B cell (primary cell): ENCODE measurements at regions of chr12 and their contacts with region 1.

Region 1: GRCh38 chr12:15899282-15899870 is 11.8 kb upstream of the DERA start:
- DNase-seq: peak; percentile 59
- ATAC-seq: peak; percentile 36
- H3K4me3 ChIP-seq: no peak overlapping the region
- H3K4me3 Mint-ChIP-seq: no peak overlapping the region
- H3K27ac ChIP-seq: peak overlapping the region in 1 of 2 donors; percentile 45
- H3K27ac Mint-ChIP-seq: peak overlapping the region; percentile 34
- H3K4me1 ChIP-seq: no peaks in the 10 kb centered on the region
- H3K4me1 Mint-ChIP-seq: peaks cover 3% of the 10 kb centered on the region
- H3K27me3 ChIP-seq: no peaks in the 10 kb centered on the region
- H3K27me3 Mint-ChIP-seq: no peaks in the 10 kb centered on the region
- CTCF ChIP-seq: peak; percentile 95

Region 2: DNA sequence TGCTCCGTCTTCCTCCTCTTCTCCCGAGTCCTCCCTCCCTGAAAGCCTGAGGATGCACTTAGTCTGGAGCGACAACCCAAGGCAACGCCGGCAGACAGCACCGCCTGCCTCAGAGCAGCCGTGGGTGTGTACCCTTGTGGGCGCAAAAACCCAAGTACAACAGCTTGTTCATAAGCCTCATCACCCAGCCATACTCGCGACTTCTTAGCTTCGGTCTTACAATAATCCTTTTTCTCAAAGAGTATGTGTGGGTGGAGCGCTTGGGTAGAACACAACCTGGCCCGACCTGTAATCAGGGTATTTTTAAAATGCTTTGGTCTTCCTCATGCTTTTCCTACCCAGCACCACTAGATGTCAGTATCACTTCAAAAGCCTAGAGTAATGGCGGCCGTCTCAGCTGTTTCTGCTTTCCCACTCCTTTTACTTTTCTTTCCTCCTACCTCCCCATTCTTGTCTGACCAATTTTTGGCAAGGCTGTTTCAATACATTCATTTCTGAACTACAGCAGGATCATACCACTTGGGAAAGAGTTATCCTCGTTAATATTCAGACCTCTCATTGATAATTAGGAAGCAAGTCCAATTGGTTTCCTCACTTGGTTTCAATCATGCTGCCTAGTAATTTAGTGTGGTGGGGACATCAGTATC is 309.1 kb before region 1 on chr12:
- CTCF ChIA-PET with region 1: interaction called, 38 read pairs
- POLR2A ChIA-PET with region 1: no interaction called
- intact Hi-C with region 1: loop called (anchors 1 kb)
- DNase-seq: peak; percentile 79
- ATAC-seq: peak; percentile 91
- H3K4me3 ChIP-seq: peak overlapping the region in 1 of 5 experiments; percentile 20
- H3K4me3 Mint-ChIP-seq: peak overlapping the region; percentile 81
- H3K27ac ChIP-seq: no peak overlapping the region
- H3K27ac Mint-ChIP-seq: peak overlapping the region; percentile 64
- H3K4me1 ChIP-seq: peaks cover 6 to 8% of the 10 kb centered on the region in 2 donors
- H3K4me1 Mint-ChIP-seq: peaks cover 9% of the 10 kb centered on the region
- H3K27me3 ChIP-seq: no peaks in the 10 kb centered on the region
- H3K27me3 Mint-ChIP-seq: no peaks in the 10 kb centered on the region
- CTCF ChIP-seq: peak; percentile 91

Region 3: DNA sequence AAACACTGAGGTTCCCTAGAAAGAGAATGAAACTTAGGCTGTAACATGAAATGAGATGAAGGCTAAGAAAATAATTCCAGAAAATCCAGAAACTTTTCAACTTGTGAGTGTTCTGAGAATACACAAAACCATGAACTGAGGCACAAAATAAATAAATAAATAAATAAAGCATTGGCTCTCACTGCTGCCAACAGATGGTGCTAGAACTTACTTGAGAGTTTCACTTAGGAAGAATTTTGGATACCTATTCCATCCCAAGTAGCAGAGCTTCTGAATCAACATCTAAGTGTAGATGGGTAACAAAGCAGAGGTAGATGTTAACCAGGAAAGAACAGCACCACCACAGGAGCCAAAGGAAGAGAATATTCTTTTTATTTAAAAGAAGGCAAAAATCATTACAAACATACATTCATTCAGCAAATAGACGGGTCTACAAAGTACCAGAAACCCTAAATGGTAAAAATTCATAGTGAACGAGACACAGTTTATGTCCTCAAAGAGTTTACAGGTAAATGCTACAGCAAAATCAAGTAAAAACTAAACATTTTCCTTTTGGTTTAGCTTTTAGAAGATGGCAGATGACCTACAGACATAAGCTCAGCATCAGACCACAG is 126.9 kb before region 1 on chr12:
- CTCF ChIA-PET with region 1: interaction called, 4 read pairs
- POLR2A ChIA-PET with region 1: no interaction called
- intact Hi-C with region 1: loop called (anchors 1 kb)
- DNase-seq: peak; percentile 22
- ATAC-seq: no peak
- H3K4me3 ChIP-seq: no peak overlapping the region
- H3K4me3 Mint-ChIP-seq: no peak overlapping the region
- H3K27ac ChIP-seq: no peak overlapping the region
- H3K27ac Mint-ChIP-seq: no peak overlapping the region
- H3K4me1 ChIP-seq: no peaks in the 10 kb centered on the region
- H3K4me1 Mint-ChIP-seq: no peaks in the 10 kb centered on the region
- H3K27me3 ChIP-seq: no peaks in the 10 kb centered on the region
- H3K27me3 Mint-ChIP-seq: peaks cover 11% of the 10 kb centered on the region
- CTCF ChIP-seq: peak; percentile 51

Region 4: DNA sequence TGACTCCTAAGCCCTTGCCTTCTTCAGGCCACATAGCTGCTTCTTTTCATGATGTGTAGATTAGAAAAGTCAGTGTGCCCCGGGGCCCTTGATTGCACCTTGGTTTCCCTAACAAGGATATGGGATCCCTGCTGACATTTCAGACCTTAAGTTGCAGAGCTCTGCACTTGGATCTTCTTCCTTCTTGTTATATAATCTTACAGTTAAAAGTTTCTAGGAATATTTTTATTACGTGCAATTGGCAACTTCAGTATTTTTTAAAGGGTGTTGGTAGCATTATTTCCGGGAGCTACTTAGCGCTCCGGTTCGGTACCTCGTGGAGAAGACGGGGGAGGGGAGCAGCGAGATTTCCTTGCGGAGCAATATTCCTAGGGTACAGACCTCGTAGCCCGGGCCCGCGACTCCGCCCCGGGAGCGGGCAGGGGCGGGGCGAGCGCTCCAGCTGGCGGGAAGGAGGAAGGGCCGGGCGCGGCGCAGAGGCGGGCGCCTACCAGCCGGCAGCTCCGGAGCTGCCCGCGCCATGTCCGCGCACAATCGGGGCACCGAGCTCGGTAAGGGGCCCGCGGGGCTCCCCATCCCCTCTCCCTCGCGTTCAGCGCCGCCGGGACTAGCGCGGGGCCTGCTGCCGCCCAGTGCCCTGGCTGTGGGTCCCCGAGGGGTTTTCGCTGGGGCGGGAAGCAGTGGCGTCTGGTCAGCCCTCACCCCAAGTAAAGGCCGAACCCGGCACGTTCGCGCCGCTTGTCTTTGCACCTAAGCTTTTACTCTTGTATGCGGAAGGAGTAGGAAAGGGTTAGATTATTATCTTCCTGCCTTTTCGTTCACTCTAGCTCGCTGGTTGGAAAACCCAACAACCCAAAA is 11.7 kb after region 1 on chr12 and contains the start of gene DERA:
- CTCF ChIA-PET with region 1: interaction called, 38 read pairs
- POLR2A ChIA-PET with region 1: interaction called, 4 read pairs
- intact Hi-C with region 1: no loop called
- DNase-seq: peak; percentile 75
- ATAC-seq: peak; percentile 95
- H3K4me3 ChIP-seq: peak within 1 kb of the TSS; percentile 74 to 98 (median 88)
- H3K4me3 Mint-ChIP-seq: peak within 1 kb of the TSS; percentile 93
- H3K27ac ChIP-seq: peak within 1 kb of the TSS; percentile 79 to 88
- H3K27ac Mint-ChIP-seq: peak within 1 kb of the TSS; percentile 92
- H3K4me1 ChIP-seq: peaks cover 6 to 10% of the 10 kb centered on the region in 2 donors
- H3K4me1 Mint-ChIP-seq: peaks cover 19% of the 10 kb centered on the region
- H3K27me3 ChIP-seq: no peaks in the 10 kb centered on the region
- H3K27me3 Mint-ChIP-seq: no peaks in the 10 kb centered on the region
- CTCF ChIP-seq: no peak
- total RNA-seq, gene DERA: 20.5 and 21.6 TPM in 2 replicates

Region 5: GRCh38 chr12:16421810-16422209 is 522.4 kb after region 1 on chr12:
- CTCF ChIA-PET with region 1: no interaction called
- POLR2A ChIA-PET with region 1: no interaction called
- intact Hi-C with region 1: no loop called
- DNase-seq: no peak
- ATAC-seq: no peak
- H3K4me3 ChIP-seq: no peak overlapping the region
- H3K4me3 Mint-ChIP-seq: no peak overlapping the region
- H3K27ac ChIP-seq: no peak overlapping the region
- H3K27ac Mint-ChIP-seq: no peak overlapping the region
- H3K4me1 ChIP-seq: no peaks in the 10 kb centered on the region
- H3K4me1 Mint-ChIP-seq: no peaks in the 10 kb centered on the region
- H3K27me3 ChIP-seq: no peaks in the 10 kb centered on the region
- H3K27me3 Mint-ChIP-seq: no peaks in the 10 kb centered on the region
- CTCF ChIP-seq: no peak